H1 (cell line): ENCODE measurements at regions of chr20 and their contacts with region 1.

Region 1: DNA sequence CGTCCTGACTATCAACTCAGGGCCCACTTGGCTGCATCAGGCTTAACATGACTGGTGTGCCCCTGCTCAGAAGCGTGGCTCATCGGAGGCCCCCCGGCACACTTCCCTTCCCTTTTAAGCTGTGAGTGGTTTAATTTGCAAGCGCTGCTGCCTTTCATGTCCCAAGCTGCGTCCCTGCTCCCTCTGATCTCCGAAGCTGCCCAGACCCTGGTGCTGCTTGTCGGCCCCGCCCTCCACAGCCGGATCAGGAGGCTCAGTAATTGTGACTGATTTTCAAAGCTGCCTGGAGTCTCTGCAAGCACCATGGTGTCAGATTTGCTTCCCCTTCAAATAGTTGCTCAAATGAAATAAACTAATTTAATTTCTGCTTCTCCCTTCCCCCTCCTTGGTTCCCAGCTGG is 71.1 kb downstream of the CDH22 start:
- DNase-seq: no peak
- H3K4me3 ChIP-seq: peak overlapping the region in 1 of 4 experiments; percentile 41; a peak in 1 of 8 replicates
- H3K27ac ChIP-seq: no peak overlapping the region
- H3K4me1 ChIP-seq: peaks cover 0 to 15% (median 4%) of the 10 kb centered on the region in 4 experiments; a peak in 5 of 7 replicates
- H3K27me3 ChIP-seq: no peaks in the 10 kb centered on the region
- CTCF ChIP-seq: no peak
- EP300 ChIP-seq: no peak
- POLR2A ChIP-seq: no peak
- RAD21 ChIP-seq: no peak

Region 2: DNA sequence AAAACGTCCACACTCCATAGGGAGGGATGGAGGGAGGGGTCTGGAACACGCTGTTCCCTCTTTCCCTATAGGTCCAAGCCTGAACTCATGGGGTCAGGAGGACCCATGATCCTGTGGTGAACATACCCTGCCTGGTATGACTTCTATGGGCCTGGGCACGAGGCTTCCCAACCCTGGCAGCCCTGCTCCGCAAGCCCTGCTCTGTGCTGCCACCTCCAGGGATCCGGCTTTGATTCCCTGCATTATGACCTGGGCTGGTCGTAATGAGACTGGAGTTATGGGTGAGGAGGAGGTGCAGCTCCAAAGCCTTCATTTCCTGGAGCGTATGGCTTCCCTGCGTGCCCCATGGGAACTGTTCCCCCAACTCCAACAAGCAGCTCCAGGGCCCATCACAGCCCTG is 16.2 kb after region 1 on chr20:
- CTCF ChIA-PET with region 1: interaction called, 11 read pairs
- POLR2A ChIA-PET with region 1: interaction called, 6 read pairs
- DNase-seq: peak in 1 of 2 experiments; percentile 27
- H3K4me3 ChIP-seq: no peak overlapping the region
- H3K27ac ChIP-seq: no peak overlapping the region
- H3K4me1 ChIP-seq: peaks cover 0 to 9% (median 5%) of the 10 kb centered on the region in 4 experiments; a peak in 5 of 7 replicates
- H3K27me3 ChIP-seq: peaks cover 9 to 38% (median 28%) of the 10 kb centered on the region in 4 experiments
- CTCF ChIP-seq: peak; percentile 72 to 77 (median 73)
- EP300 ChIP-seq: no peak
- POLR2A ChIP-seq: no peak
- RAD21 ChIP-seq: peak; percentile 67 to 75

Region 3: GRCh38 chr20:46283426-46284039 is 46.3 kb after region 1 on chr20:
- CTCF ChIA-PET with region 1: no interaction called
- POLR2A ChIA-PET with region 1: no interaction called
- DNase-seq: no peak
- H3K4me3 ChIP-seq: no peak overlapping the region
- H3K27ac ChIP-seq: no peak overlapping the region
- H3K4me1 ChIP-seq: peaks cover 0 to 9% (median 1%) of the 10 kb centered on the region in 4 experiments; a peak in 1 of 7 replicates
- H3K27me3 ChIP-seq: no peaks in the 10 kb centered on the region
- CTCF ChIP-seq: no peak
- EP300 ChIP-seq: no peak
- POLR2A ChIP-seq: no peak
- RAD21 ChIP-seq: no peak

Region 4: GRCh38 chr20:46296526-46297250 is 59.5 kb after region 1 on chr20:
- CTCF ChIA-PET with region 1: no interaction called
- POLR2A ChIA-PET with region 1: no interaction called
- DNase-seq: no peak
- H3K4me3 ChIP-seq: no peak overlapping the region
- H3K27ac ChIP-seq: no peak overlapping the region
- H3K4me1 ChIP-seq: peaks cover 0 to 9% (median 3%) of the 10 kb centered on the region in 4 experiments; a peak in 4 of 7 replicates
- H3K27me3 ChIP-seq: peaks cover 0 to 3% (median 0%) of the 10 kb centered on the region in 4 experiments; a peak in 1 of 7 replicates
- CTCF ChIP-seq: no peak
- EP300 ChIP-seq: no peak
- POLR2A ChIP-seq: no peak
- RAD21 ChIP-seq: no peak

Region 5: DNA sequence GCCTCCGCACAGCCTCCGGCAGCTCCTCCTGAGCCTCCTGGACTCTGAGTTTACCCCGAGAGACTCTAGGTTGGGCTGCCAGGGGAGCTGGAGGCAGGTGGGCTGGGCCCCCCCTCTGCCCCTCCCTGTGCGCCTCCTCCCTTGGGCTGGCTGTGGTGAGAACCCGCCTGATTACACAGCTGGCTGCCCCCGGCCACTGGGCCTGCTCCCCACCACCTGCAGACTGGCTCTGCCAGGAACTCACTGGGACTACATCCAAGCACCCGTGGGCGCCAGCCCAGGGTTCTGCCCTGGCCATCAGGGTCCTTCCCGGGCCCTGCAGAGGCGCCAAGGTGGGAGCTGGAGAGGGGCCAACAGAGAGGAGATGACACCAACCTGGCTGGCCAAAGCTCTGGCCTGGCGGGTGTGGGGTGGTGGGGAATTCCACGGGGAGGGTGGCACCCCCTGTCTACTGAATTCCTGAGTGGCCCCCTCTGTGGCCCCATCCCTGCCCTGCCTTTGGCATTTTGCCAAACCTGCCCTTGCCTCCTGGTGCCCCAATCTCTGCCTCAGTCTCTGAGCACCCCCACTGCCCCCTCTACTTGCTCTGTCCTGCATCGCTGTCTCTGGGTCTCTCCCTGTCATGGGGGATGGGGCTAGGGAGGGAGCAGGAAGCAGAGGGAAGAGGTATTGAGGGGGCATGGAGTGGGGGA is 93.0 kb after region 1 on chr20:
- CTCF ChIA-PET with region 1: no interaction called
- POLR2A ChIA-PET with region 1: no interaction called
- DNase-seq: no peak
- H3K4me3 ChIP-seq: no peak overlapping the region
- H3K27ac ChIP-seq: no peak overlapping the region
- H3K4me1 ChIP-seq: peaks cover 0 to 27% (median 9%) of the 10 kb centered on the region in 4 experiments; a peak in 6 of 7 replicates
- H3K27me3 ChIP-seq: peaks cover 0 to 3% (median 0%) of the 10 kb centered on the region in 4 experiments; a peak in 2 of 7 replicates
- CTCF ChIP-seq: no peak
- EP300 ChIP-seq: no peak
- POLR2A ChIP-seq: no peak
- RAD21 ChIP-seq: no peak

Region 6: DNA sequence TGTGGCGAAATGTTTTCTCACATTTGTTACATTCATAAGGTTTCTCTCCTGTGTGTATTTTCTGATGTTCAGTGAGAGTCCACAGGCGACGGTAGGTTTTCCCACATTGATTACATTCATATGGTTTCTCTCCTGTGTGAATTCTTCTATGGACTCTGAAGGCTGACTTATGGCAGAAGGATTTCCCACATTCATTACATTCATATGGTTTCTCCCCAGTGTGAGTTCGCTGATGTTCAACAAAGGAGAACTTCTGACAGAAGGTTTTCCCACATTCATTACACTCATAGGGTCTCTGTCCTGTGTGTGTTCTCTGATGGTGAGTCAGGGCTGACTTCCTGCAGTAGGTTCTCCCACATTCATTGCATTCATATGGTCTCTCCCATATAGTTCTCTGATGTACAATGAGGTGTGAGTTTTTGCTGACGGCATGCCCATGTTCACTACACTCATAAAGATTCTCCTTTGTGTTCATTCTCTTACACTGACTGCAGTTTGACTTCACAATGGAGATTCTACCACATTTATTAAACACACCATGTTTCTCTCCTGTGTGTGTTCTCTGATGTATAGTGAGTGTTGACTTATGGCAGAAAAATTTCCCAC is 264.2 kb after region 1 on chr20:
- CTCF ChIA-PET with region 1: no interaction called
- POLR2A ChIA-PET with region 1: no interaction called
- DNase-seq: no peak
- H3K4me3 ChIP-seq: peak overlapping the region in 1 of 4 experiments; percentile 39; a peak in 1 of 8 replicates
- H3K27ac ChIP-seq: no peak overlapping the region
- H3K4me1 ChIP-seq: no peaks in the 10 kb centered on the region
- H3K27me3 ChIP-seq: no peaks in the 10 kb centered on the region
- CTCF ChIP-seq: no peak
- EP300 ChIP-seq: no peak
- POLR2A ChIP-seq: 0 out of 3 replicates have a peak, but pooled peaks of 1 of the 2 experiments have one; percentile 39
- RAD21 ChIP-seq: no peak